Activated CD4-positive, alpha-beta memory T cell treated with anti-CD3 and anti-CD28 coated beads, Interleukin-2, amount 10 ng/mL, durations not matched to agents 7 days and 5 days (primary cell): ENCODE measurements at regions of chr1 and their contacts with region 1.

Region 1: DNA sequence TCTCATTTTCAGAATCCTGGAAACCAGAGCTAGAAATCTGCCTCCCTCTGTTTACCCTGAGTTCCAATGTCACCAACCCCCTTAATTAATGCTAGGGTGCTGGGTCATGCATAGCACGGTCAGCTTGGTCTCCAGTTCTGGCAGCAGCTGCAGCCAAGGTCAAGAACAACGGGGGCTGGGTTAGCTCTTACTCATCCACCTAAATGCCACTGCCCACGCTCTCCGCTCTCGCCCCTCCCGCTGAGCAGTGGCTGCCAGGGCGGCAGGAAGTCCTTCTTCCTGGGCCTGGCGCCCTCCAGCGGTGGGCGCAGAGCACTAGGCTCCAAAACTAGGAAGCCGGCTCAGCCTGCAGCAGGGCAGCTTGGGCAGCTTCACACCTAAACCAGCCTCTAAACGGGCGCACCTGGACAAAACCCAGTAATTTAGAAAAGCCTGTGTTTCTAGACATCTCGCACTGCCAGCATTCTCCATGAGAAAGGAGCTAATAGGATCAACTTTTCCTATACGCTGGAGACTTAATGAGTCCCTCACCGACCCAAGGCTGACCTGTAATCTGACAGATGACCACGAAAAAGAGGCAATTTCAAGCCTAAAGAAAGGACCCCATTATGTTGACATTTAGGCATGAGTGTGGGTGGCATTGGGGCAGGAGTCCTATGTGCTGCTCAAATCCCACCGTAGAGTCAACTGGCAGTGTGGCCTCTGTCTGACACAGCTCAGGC is 78.3 kb upstream of the LRRN2 start:
- DNase-seq: peak; percentile 77
- H3K4me3 Mint-ChIP-seq: no peak overlapping the region
- H3K27ac Mint-ChIP-seq: no peak overlapping the region
- H3K4me1 Mint-ChIP-seq: peaks cover 10% of the 10 kb centered on the region
- H3K27me3 Mint-ChIP-seq: peaks cover 41% of the 10 kb centered on the region

Region 2: GRCh38 chr1:204578867-204579664 is 184.8 kb before region 1 on chr1:
- CTCF ChIA-PET with region 1: interaction called, 12 read pairs
- POLR2A ChIA-PET with region 1: no interaction called
- DNase-seq: peak; percentile 55
- H3K4me3 Mint-ChIP-seq: peak overlapping the region; percentile 74
- H3K27ac Mint-ChIP-seq: peak overlapping the region; percentile 88
- H3K4me1 Mint-ChIP-seq: peaks cover 27% of the 10 kb centered on the region
- H3K27me3 Mint-ChIP-seq: no peaks in the 10 kb centered on the region

Region 3: DNA sequence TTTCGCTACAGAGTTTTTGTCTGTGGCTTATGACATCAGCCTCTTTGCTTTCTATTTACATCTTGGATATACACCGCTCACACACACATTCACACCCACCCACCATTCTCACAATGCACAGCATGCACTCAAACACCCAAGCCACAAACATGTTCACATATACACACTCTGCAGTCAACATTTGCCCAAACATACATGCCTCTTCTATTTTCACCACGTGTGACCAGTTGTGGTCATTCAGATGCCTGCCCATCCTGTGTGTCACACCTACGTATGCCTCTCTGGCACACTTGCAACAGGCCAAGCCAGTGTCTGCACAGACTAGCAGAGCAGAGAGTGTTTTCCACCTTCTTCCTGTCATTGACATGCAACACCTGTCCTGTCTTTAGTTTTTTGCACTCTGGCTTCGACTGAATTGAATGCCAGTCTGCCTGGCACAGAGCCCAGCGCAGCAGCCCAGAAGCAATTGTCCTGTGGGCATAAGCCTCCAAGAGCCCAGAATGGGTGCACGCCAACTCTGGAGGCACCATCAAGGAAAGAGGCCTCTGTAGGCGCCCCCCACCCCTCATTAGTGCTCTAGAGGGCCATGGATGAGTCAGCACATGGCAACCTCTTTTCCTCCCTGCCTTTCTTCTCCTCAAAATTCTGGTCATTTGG is 40.6 kb before region 1 on chr1:
- CTCF ChIA-PET with region 1: no interaction called
- POLR2A ChIA-PET with region 1: no interaction called
- DNase-seq: no peak
- H3K4me3 Mint-ChIP-seq: no peak overlapping the region
- H3K27ac Mint-ChIP-seq: no peak overlapping the region
- H3K4me1 Mint-ChIP-seq: peaks cover 4% of the 10 kb centered on the region
- H3K27me3 Mint-ChIP-seq: peaks cover 23% of the 10 kb centered on the region

Region 4: DNA sequence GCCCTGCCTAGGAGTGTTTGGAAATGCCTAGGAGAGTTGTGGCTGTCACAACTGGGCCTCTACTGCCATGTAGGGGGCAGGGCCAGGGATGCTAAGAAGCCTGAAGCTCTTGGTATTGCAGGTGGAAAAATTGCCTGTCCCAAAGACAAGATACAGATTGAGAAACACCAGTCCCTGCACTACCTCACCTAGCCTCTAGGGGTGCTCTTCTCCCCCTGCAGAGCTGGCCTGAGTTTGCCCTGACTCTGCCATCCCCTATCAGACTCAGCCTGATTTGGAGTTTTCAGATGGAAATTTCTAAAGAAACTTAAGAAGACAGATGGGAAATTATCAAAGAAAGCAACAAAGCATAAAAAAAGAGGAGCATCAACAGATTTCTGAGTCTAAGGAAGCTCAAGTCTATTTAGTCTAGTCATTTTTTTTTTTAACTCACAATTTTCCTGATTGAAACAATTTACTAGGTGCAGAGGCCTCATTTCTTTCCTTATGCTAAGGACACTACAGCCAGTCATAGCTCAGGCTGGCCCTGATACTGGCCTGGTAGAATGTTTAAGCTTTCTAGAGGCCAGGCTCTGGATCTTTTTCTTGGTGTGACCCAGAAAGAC is 16.9 kb before region 1 on chr1:
- CTCF ChIA-PET with region 1: interaction called, 17 read pairs
- POLR2A ChIA-PET with region 1: interaction called, 3 read pairs
- DNase-seq: peak; percentile 52
- H3K4me3 Mint-ChIP-seq: no peak overlapping the region
- H3K27ac Mint-ChIP-seq: no peak overlapping the region
- H3K4me1 Mint-ChIP-seq: no peaks in the 10 kb centered on the region
- H3K27me3 Mint-ChIP-seq: peaks cover 14% of the 10 kb centered on the region

Region 5: GRCh38 chr1:204782118-204782700 is 18.3 kb after region 1 on chr1:
- CTCF ChIA-PET with region 1: interaction called, 13 read pairs
- POLR2A ChIA-PET with region 1: no interaction called
- DNase-seq: no peak
- H3K4me3 Mint-ChIP-seq: no peak overlapping the region
- H3K27ac Mint-ChIP-seq: no peak overlapping the region
- H3K4me1 Mint-ChIP-seq: no peaks in the 10 kb centered on the region
- H3K27me3 Mint-ChIP-seq: peaks cover 40% of the 10 kb centered on the region